Transverse colon (tissue), 4 donors: ENCODE measurements at regions of chr4 and their contacts with region 1.

Region 1: GRCh38 chr4:26860157-26860921 is at the start of gene STIM2:
- DNase-seq: peak; percentile 97
- H3K4me3 ChIP-seq: peak within 1 kb of the TSS; percentile 43 to 98 (median 84)
- H3K27ac ChIP-seq: peak within 1 kb of the TSS; percentile 96 to 99 (median 98)
- H3K4me1 ChIP-seq: peaks cover 7 to 61% (median 33%) of the 10 kb centered on the region in 4 donors
- H3K27me3 ChIP-seq: no peaks in the 10 kb centered on the region
- CTCF ChIP-seq: peak; percentile 9 to 71 (median 28)
- EP300 ChIP-seq: no peak
- POLR2A ChIP-seq: peak; percentile 95
- total RNA-seq, gene STIM2: 17.2 to 71.4 (median 20.7) TPM

Region 2: GRCh38 chr4:27000820-27001219 is 140.5 kb after region 1 on chr4:
- in situ Hi-C with region 1: loop called in 2 of 4 experiments (anchors 10 kb)
- intact Hi-C with region 1: no loop called
- DNase-seq: no peak
- H3K4me3 ChIP-seq: no peak overlapping the region
- H3K27ac ChIP-seq: no peak overlapping the region
- H3K4me1 ChIP-seq: peaks cover 0 to 21% (median 8%) of the 10 kb centered on the region in 4 donors
- H3K27me3 ChIP-seq: no peaks in the 10 kb centered on the region
- CTCF ChIP-seq: peak in 2 of 5 experiments; percentile 22 to 23
- EP300 ChIP-seq: no peak
- POLR2A ChIP-seq: no peak

Region 3: GRCh38 chr4:28253989-28254388 is 1393.7 kb after region 1 on chr4:
- in situ Hi-C with region 1: no loop called
- intact Hi-C with region 1: no loop called
- DNase-seq: no peak
- H3K4me3 ChIP-seq: no peak overlapping the region
- H3K27ac ChIP-seq: no peak overlapping the region
- H3K4me1 ChIP-seq: no peaks in the 10 kb centered on the region
- H3K27me3 ChIP-seq: no peaks in the 10 kb centered on the region
- CTCF ChIP-seq: no peak
- EP300 ChIP-seq: no peak
- POLR2A ChIP-seq: no peak